Activated naive CD4-positive, alpha-beta T cell treated with anti-CD3 and anti-CD28 coated beads, Interleukin-2, amount 10 ng/mL, durations not matched to agents 7 days and 5 days (primary cell): ENCODE measurements at regions of chr11 and their contacts with region 1.

Region 1: DNA sequence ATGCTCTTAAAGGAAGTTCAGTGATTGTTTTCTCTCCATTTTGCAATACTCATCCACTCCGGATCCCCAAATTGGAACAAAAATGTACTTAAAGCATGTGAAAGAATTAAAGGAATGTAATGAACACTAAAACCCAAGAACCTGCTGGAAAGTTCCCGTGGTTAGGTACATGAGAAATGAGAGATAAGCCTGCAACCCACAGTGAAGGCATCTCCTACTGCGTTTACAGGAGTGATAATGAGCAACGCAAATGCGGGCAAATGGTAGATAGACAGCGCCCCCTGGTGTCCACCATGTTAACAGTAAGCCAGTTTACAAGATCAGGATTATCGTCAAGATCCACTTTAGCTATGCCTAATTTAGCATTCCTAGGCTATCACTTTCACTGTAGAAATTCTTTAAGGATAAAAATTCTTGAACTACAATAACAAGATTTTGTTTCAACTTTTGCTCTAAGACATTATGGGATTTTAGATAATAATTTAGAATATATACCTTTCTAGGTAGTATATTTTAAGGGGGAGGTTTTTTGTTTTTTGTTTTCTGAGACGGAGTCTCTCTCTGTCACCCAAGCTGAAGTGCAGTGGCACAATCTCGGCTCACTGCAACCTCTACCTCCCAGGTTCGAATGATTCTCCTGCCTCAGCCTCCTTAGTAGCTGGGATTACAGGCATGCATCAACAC is 29.9 kb downstream of the ALG9 start:
- DNase-seq: peak; percentile 91
- H3K4me3 Mint-ChIP-seq: no peak overlapping the region
- H3K27ac Mint-ChIP-seq: no peak overlapping the region
- H3K4me1 Mint-ChIP-seq: peaks cover 7% of the 10 kb centered on the region
- H3K27me3 Mint-ChIP-seq: no peaks in the 10 kb centered on the region

Region 2: DNA sequence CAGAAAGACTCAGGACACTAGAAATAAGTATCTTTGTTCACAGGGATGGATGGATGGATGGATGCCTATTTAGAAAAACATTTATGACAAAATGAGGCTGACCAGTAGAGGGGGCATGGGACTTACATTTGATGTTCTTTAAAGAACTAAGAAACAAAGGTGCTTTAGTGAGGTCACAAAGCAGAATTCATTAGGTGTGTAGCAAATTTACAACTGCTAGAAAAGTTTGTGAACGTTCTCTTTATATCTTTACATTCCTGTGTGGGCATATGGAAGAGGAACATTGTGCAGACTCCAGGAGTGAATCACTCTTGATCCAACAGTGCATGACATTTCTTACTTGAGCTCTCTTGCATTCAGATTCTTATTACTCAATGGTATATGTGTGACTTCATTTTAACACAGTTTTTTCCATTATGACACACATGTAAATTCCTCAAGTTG is 255.1 kb before region 1 on chr11:
- CTCF ChIA-PET with region 1: interaction called, 50 read pairs
- DNase-seq: peak; percentile 62
- H3K4me3 Mint-ChIP-seq: no peak overlapping the region
- H3K27ac Mint-ChIP-seq: no peak overlapping the region
- H3K4me1 Mint-ChIP-seq: no peaks in the 10 kb centered on the region
- H3K27me3 Mint-ChIP-seq: peaks cover 3% of the 10 kb centered on the region